Activated CD8-positive, alpha-beta T cell treated with anti-CD3 and anti-CD28 coated beads, Interleukin-2, amount 10 ng/mL, durations not matched to agents 7 days and 5 days (primary cell): ENCODE measurements at regions of chr20 and their contacts with region 1.

Region 1: DNA sequence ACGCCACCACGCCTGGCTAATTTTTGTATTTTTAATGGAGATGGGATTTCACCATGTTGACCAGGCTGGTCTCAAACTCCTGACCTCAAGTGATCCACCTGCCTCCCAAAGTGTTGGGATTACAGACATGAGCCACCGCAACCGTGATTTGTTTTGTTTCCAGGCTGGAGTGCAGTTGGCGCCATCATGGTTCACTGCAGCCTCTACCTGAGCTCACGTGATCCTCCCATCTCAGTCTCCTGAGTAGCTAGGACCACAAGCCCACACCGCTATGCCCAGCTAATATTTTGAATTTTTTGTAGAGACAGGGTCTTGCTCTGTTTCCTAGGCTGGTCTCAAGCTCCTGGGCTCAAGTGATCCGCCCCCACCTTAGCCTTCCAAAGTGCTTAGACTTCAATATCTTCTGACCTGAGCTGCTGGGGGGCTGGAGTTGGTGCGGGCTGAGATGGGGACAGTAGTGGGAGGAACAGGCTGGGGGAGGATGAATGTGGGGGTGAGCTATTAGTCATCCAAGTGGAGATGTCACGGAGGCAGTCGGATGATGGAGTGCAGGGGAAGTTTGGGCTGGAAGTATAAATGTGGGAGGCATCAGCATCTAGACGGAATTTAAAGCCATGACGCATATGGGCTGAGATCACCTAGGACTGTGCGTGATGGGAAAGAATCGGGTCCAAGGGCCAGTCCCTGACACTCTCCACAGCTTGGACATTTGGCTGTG is 23.1 kb upstream of the ZMYND8 start:
- DNase-seq: no peak
- ATAC-seq: no peak
- H3K4me3 Mint-ChIP-seq: no peak overlapping the region
- H3K27ac Mint-ChIP-seq: peak overlapping the region; percentile 78
- H3K4me1 Mint-ChIP-seq: peaks cover 34% of the 10 kb centered on the region
- H3K27me3 Mint-ChIP-seq: no peaks in the 10 kb centered on the region

Region 2: DNA sequence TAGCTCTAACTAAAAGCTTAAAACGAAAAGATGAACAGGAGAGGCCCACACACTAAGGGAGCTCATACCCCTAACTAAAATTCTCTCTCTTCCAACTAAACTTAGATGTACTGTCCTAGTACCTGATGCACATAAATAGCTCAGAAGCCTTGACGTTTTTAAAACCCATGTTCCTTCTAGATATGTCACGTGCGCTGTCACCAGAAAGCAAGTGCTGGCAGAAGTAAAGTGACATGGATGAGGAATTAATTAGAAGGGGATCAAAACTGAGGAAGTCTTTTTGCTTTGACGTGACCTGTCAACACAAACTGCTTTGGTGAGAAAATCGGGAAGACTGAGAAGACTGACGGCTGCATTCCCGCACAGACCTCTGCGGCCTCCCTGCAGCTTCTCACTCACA is 165.6 kb before region 1 on chr20:
- CTCF ChIA-PET with region 1: interaction called, 45 read pairs
- POLR2A ChIA-PET with region 1: no interaction called
- DNase-seq: no peak
- ATAC-seq: no peak
- H3K4me3 Mint-ChIP-seq: no peak overlapping the region
- H3K27ac Mint-ChIP-seq: peak overlapping the region; percentile 12
- H3K4me1 Mint-ChIP-seq: no peaks in the 10 kb centered on the region
- H3K27me3 Mint-ChIP-seq: no peaks in the 10 kb centered on the region

Region 3: DNA sequence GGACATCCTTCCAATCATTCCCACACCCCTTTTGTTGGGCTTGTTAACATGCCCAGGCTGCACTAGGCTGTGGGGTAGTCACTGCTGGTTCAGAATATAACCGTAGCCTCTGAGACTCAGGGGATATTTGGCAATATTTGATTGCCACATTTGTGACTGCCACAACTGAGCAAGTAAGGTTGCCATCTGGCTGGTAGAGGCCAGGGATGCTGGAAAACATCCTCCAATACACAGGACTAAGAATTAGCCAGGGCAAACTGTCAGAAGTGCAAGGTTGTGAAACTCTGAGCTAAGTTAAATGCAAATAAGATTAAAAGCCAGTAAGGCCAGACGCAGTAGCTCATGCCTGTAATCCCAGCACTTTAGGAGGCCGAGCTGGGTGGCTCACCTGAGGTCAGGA is 135.1 kb before region 1 on chr20:
- CTCF ChIA-PET with region 1: interaction called, 12 read pairs
- POLR2A ChIA-PET with region 1: no interaction called
- DNase-seq: no peak
- ATAC-seq: no peak
- H3K4me3 Mint-ChIP-seq: no peak overlapping the region
- H3K27ac Mint-ChIP-seq: no peak overlapping the region
- H3K4me1 Mint-ChIP-seq: no peaks in the 10 kb centered on the region
- H3K27me3 Mint-ChIP-seq: no peaks in the 10 kb centered on the region

Region 4: DNA sequence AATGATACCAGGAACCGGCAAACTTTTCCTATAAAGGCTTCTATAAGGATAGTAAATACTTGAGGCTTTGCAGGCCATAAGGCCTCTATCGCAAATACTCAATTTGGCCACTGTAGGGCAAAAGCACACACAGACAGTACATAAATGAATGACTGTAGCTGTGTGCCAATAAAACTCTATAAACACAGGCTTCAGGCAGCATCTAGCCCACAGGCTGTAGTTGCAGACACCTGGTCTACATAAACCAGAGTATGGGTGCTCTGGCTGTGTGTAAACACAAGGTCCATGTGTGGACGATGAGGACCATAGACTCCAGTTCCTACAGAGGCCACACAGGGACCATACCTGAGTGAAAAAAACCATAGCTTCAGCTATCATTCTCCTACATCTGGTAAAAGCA is 75.3 kb before region 1 on chr20:
- CTCF ChIA-PET with region 1: interaction called, 20 read pairs
- POLR2A ChIA-PET with region 1: no interaction called
- DNase-seq: no peak
- ATAC-seq: no peak
- H3K4me3 Mint-ChIP-seq: no peak overlapping the region
- H3K27ac Mint-ChIP-seq: no peak overlapping the region
- H3K4me1 Mint-ChIP-seq: peaks cover 21% of the 10 kb centered on the region
- H3K27me3 Mint-ChIP-seq: no peaks in the 10 kb centered on the region

Region 5: GRCh38 chr20:47392015-47392720 is 12.6 kb after region 1 on chr20:
- CTCF ChIA-PET with region 1: interaction called, 26 read pairs
- POLR2A ChIA-PET with region 1: no interaction called
- DNase-seq: no peak
- ATAC-seq: no peak
- H3K4me3 Mint-ChIP-seq: no peak overlapping the region
- H3K27ac Mint-ChIP-seq: peak overlapping the region; percentile 72
- H3K4me1 Mint-ChIP-seq: peaks cover 18% of the 10 kb centered on the region
- H3K27me3 Mint-ChIP-seq: no peaks in the 10 kb centered on the region

Region 6: DNA sequence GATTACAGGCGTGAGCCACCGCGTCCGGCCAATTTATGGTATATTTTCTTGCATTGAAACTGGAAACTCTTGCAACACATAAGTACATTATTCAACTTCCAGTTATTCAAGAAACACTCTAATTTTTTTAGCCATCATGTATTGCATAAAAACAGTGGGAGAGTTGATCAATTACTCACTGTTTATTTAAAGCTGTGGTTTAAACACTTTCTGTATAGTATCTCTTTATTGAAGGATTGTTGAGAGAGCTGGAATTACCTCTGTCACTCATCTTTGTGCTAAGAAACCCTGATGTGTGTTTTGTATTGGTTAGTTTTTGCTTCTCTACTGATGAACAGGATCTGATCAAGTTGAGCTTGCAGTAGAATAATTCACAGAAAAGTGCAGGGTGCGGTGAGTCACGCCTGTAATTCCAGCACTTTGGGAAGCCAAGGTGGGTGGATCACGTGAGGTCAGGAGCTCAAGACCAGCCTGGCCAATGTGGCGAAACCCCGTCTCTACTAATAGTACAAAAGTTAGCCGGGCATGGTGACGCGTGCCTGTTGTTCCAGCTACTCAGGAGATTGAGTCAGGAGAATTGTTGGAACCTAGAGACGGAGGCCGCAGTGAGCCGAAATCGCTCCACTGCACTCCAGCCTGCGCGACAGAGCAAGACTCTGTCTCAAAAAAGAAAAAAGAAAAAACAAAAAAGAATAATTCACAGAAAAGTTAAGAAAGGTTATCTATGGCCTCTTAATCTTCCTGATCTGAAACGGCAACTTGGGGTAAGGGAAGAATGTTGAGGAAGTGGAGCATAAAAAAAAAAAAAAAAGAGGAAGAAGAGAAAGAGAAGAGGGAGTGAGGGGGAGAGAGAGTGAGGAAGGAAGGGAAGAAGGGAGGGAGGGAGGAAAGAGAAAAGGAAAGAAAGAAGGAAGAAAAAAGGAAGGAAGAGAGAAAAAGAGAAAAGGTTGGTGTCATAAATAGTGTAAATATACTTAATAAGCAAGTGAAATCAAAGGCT is 52.9 kb after region 1 on chr20:
- CTCF ChIA-PET with region 1: no interaction called
- POLR2A ChIA-PET with region 1: no interaction called
- DNase-seq: no peak
- ATAC-seq: no peak
- H3K4me3 Mint-ChIP-seq: no peak overlapping the region
- H3K27ac Mint-ChIP-seq: no peak overlapping the region
- H3K4me1 Mint-ChIP-seq: no peaks in the 10 kb centered on the region
- H3K27me3 Mint-ChIP-seq: no peaks in the 10 kb centered on the region

Region 7: GRCh38 chr20:47487175-47487917 is 107.8 kb after region 1 on chr20:
- CTCF ChIA-PET with region 1: interaction called, 12 read pairs
- POLR2A ChIA-PET with region 1: interaction called, 3 read pairs
- DNase-seq: peak; percentile 82
- ATAC-seq: peak; percentile 89
- H3K4me3 Mint-ChIP-seq: peak overlapping the region; percentile 69
- H3K27ac Mint-ChIP-seq: peak overlapping the region; percentile 96
- H3K4me1 Mint-ChIP-seq: peaks cover 61% of the 10 kb centered on the region
- H3K27me3 Mint-ChIP-seq: no peaks in the 10 kb centered on the region

Region 8: GRCh38 chr20:47610247-47610944 is 230.8 kb after region 1 on chr20:
- CTCF ChIA-PET with region 1: interaction called, 15 read pairs
- POLR2A ChIA-PET with region 1: no interaction called
- DNase-seq: peak; percentile 89
- ATAC-seq: peak; percentile 87
- H3K4me3 Mint-ChIP-seq: peak overlapping the region; percentile 69
- H3K27ac Mint-ChIP-seq: peak overlapping the region; percentile 94
- H3K4me1 Mint-ChIP-seq: peaks cover 80% of the 10 kb centered on the region
- H3K27me3 Mint-ChIP-seq: no peaks in the 10 kb centered on the region